Ovary (tissue), 10 donors: ENCODE measurements at regions of chr6 and their contacts with region 1.

Region 1: GRCh38 chr6:100228831-100229641 is 235.0 kb upstream of the MCHR2 start:
- DNase-seq: peak in 3 of 5 donors; percentile 13 to 48 (median 32)
- H3K4me3 ChIP-seq: peak overlapping the region; percentile 4
- H3K27ac ChIP-seq: no peak overlapping the region
- H3K4me1 ChIP-seq: no peaks in the 10 kb centered on the region
- H3K27me3 ChIP-seq: no peaks in the 10 kb centered on the region
- CTCF ChIP-seq: no peak
- EP300 ChIP-seq: no peak
- POLR2A ChIP-seq: no peak

Region 2: DNA sequence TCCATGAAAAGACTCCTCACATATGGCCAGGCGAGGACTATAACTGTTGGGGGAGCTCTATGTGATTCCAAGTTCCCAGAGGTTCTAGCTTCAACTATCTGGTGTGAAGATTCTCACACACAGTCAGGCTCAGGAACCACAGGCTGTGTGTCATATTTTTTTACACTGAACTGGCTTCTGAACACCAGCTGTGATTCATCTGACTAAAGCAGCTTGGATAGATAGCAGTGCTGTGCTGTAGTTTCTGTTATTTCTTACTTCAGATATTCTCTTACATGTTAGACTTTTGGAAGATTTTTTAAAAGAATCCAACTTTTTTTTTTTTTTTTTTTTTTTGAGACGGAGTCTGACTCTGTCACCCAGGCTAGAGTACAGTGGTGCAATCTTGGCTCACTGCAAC is 94.3 kb before region 1 on chr6:
- intact Hi-C with region 1: no loop called
- DNase-seq: no peak
- H3K4me3 ChIP-seq: no peak overlapping the region
- H3K27ac ChIP-seq: no peak overlapping the region
- H3K4me1 ChIP-seq: no peaks in the 10 kb centered on the region
- H3K27me3 ChIP-seq: no peaks in the 10 kb centered on the region
- CTCF ChIP-seq: no peak
- EP300 ChIP-seq: no peak
- POLR2A ChIP-seq: no peak

Region 3: GRCh38 chr6:100269189-100269588 is 40.2 kb after region 1 on chr6:
- intact Hi-C with region 1: no loop called
- DNase-seq: no peak
- H3K4me3 ChIP-seq: no peak overlapping the region
- H3K27ac ChIP-seq: no peak overlapping the region
- H3K4me1 ChIP-seq: no peaks in the 10 kb centered on the region
- H3K27me3 ChIP-seq: no peaks in the 10 kb centered on the region
- CTCF ChIP-seq: no peak
- EP300 ChIP-seq: no peak
- POLR2A ChIP-seq: no peak

Region 4: GRCh38 chr6:100404051-100404450 is 175.0 kb after region 1 on chr6:
- intact Hi-C with region 1: loop called in 1 of 4 experiments (anchors 10 kb)
- DNase-seq: no peak
- H3K4me3 ChIP-seq: no peak overlapping the region
- H3K27ac ChIP-seq: no peak overlapping the region
- H3K4me1 ChIP-seq: no peaks in the 10 kb centered on the region
- H3K27me3 ChIP-seq: no peaks in the 10 kb centered on the region
- CTCF ChIP-seq: no peak
- EP300 ChIP-seq: no peak
- POLR2A ChIP-seq: no peak